ENCODE measurements at regions of chr2 and their contacts with region 1.

Region 1: DNA sequence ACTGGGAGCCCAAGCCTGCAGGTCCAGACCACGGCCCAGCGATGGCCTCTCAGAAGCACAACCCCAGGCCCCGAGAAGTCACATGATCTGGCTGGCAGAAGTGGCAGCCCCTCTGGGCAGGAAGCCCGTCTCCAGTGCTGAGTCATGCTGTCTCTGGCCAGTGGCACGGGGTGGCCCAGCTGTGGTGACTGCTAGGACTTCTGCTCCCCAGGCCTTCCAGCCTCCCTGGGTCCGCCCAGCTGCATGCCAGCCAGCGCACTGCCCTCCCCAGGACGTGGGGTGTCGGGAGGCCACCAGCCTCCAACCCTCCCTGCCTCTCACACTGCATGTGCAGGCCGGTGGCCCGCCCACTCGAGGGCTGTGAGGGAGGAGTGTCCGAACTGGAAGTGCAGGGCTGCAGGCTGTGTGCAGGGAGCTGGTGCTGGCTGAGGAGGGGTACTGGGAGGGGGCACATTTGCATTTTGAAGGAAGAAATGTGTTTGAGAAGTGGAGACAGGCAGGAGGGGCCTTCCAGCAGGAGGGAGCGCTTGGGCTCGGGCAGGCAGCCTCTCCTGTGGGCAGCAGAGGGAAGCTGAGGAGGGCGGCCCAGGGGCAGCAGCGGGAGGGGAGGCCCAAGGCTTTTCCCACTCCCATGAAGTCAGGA is 17.0 kb upstream of the HPCAL1 start:
- DNase-seq: peak; percentile 71
- ATAC-seq: peak; percentile 46
- H3K4me3 ChIP-seq: peak overlapping the region in 1 of 2 experiments; percentile 21; a peak in 1 of 4 replicates
- H3K27ac ChIP-seq: peak overlapping the region; percentile 95
- H3K4me1 ChIP-seq: peaks cover 72 to 93% of the 10 kb centered on the region in 2 experiments
- H3K27me3 ChIP-seq: no peaks in the 10 kb centered on the region
- CTCF ChIP-seq: no peak
- POLR2A ChIP-seq: peak; percentile 55
- RAD21 ChIP-seq: no peak

Region 2: DNA sequence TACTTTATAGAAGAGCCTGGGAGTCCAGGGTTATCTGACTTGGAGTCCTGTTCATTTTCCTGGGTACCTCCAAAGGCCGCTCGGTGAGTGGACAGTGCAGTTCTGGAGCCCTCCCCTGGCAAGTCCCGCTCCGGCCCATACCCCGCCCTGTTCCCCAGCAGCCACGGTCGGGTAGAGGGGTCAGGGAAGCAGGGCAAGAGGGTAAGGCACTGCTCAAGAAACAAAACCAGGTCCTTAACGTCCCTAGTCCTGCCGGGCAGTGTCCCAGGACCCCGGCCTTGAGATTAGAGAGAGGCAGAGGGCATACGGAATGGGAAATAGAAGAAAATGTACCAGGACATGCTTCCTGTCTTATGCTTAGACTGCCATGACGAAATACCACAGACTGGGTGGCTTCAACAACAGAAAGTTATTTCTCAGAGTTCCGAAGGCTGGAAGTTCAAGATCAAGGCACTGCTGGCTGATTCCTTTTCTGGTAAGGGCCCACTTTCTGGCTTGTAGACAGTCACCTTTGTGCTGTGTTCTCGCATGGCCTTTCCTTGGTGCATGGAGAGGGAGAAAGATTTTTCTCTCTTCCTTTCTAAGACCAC is 11.7 kb after region 1 on chr2:
- CTCF ChIA-PET with region 1: no interaction called
- POLR2A ChIA-PET with region 1: interaction called, 19 read pairs
- RAD21 ChIA-PET with region 1: interaction called in 1 of 2 experiments, 3 read pairs
- intact Hi-C with region 1: no loop called
- DNase-seq: no peak
- ATAC-seq: no peak
- H3K4me3 ChIP-seq: peak overlapping the region in 1 of 2 experiments; percentile 15; a peak in 1 of 4 replicates
- H3K27ac ChIP-seq: peak overlapping the region; percentile 30; the same call in 1 of the 2 replicates
- H3K4me1 ChIP-seq: peaks cover 17 to 69% of the 10 kb centered on the region in 2 experiments
- H3K27me3 ChIP-seq: no peaks in the 10 kb centered on the region
- CTCF ChIP-seq: no peak
- POLR2A ChIP-seq: no peak
- RAD21 ChIP-seq: no peak

Region 3: GRCh38 chr2:10441948-10442347 is 156.3 kb after region 1 on chr2:
- CTCF ChIA-PET with region 1: no interaction called
- POLR2A ChIA-PET with region 1: no interaction called
- RAD21 ChIA-PET with region 1: no interaction called
- intact Hi-C with region 1: no loop called
- DNase-seq: no peak
- ATAC-seq: no peak
- H3K4me3 ChIP-seq: no peak overlapping the region
- H3K27ac ChIP-seq: no peak overlapping the region
- H3K4me1 ChIP-seq: peaks cover 7% of the 10 kb centered on the region in 2 experiments; a peak in 3 of 4 replicates
- H3K27me3 ChIP-seq: no peaks in the 10 kb centered on the region
- CTCF ChIP-seq: no peak
- POLR2A ChIP-seq: no peak
- RAD21 ChIP-seq: no peak